A673 (cell line): ENCODE measurements at regions of chr3 and their contacts with region 1.

Region 1: DNA sequence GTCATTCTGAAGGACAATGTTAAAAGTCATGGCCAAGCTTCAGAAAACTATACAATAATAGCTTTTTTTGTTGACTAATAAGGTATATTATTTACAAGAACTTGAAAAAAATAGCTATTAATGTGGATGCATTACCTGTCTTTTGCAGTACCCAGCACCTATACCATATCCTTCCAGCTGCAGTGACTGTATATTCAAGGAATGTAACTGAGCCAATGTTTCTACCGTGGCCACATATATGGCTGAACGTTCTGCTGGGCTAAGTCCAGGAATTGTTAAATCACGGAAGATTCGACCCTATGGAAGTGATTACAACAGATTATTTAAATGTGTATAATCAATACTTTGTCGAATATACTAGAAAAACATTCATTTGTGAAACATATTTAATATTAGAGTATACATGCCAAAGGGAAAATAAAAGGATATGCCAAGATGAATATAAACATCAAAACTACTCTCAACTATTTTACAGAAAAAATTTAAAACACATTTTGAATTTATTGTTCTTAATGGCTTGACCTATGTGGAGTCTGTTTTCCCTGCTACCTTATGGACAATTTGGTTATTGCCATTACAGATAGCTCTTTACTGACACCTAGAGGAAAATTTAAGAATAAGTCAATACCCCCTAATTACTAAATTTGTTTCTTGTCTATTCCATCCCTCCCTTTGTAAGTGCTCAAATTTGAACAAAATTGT is 17.6 kb downstream of the ACAD11 start:
- DNase-seq: peak; percentile 77
- H3K4me3 ChIP-seq: no peak overlapping the region
- H3K27ac ChIP-seq: no peak overlapping the region
- H3K4me1 ChIP-seq: no peaks in the 10 kb centered on the region
- H3K27me3 ChIP-seq: no peaks in the 10 kb centered on the region
- CTCF ChIP-seq: peak; percentile 75

Region 2: DNA sequence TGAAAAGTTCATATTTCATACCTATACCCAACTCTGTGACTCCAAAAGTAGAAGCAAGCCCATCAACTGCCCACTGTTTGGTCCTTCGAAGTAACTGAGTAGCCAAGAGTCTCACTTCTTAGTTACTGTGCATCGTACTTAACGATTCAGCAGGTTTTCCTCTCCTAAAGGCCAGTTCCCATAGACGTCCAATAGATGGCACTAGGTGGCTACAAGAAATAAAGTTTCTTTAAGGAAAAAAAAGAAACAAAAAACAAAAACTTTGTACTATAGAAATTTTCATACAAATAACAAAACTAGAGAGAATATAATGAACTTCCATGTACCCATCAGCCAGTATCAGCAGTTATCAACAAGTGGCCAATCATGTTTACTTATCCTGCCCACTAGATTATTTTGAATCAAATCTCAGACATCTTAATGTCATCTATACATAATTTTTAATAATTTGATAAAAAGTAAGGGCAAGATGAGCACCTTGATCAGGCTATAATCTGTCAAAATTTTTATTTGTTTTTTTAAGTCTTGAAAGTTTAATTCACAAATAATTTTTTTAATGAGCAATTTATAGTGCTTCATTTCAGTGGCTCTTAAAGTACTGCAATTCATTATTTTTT is 388.6 kb before region 1 on chr3:
- CTCF ChIA-PET with region 1: no interaction called
- POLR2A ChIA-PET with region 1: no interaction called
- intact Hi-C with region 1: loop called (anchors 5 kb)
- DNase-seq: peak; percentile 79
- H3K4me3 ChIP-seq: no peak overlapping the region
- H3K27ac ChIP-seq: no peak overlapping the region
- H3K4me1 ChIP-seq: peaks cover 8% of the 10 kb centered on the region
- H3K27me3 ChIP-seq: no peaks in the 10 kb centered on the region
- CTCF ChIP-seq: peak; percentile 78

Region 3: GRCh38 chr3:132352541-132353143 is 289.3 kb before region 1 on chr3:
- CTCF ChIA-PET with region 1: no interaction called
- POLR2A ChIA-PET with region 1: no interaction called
- intact Hi-C with region 1: loop called (anchors 2 kb)
- DNase-seq: peak; percentile 77
- H3K4me3 ChIP-seq: no peak overlapping the region
- H3K27ac ChIP-seq: no peak overlapping the region
- H3K4me1 ChIP-seq: no peaks in the 10 kb centered on the region
- H3K27me3 ChIP-seq: no peaks in the 10 kb centered on the region
- CTCF ChIP-seq: peak; percentile 92

Region 4: DNA sequence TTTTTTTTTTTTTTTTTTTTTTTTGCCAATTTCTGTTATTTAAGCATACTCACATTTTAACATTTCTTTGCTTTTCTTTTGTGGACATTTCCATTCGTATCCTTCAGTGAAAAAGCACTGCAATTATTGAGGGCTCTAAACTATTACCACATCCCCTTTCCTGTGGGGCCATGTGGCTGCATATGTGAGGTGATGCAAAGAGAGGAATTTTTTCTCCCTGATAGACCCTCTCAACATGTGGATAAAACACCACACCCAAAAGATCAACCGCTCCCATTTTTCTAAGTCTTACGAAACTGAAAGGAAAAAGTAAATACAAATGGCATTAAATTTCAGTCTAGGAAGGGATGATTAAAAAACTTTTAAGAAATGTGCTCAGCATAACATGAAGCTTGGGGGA is 155.9 kb before region 1 on chr3:
- CTCF ChIA-PET with region 1: no interaction called
- POLR2A ChIA-PET with region 1: no interaction called
- intact Hi-C with region 1: no loop called
- DNase-seq: no peak
- H3K4me3 ChIP-seq: no peak overlapping the region
- H3K27ac ChIP-seq: no peak overlapping the region
- H3K4me1 ChIP-seq: no peaks in the 10 kb centered on the region
- H3K27me3 ChIP-seq: no peaks in the 10 kb centered on the region
- CTCF ChIP-seq: no peak

Region 5: DNA sequence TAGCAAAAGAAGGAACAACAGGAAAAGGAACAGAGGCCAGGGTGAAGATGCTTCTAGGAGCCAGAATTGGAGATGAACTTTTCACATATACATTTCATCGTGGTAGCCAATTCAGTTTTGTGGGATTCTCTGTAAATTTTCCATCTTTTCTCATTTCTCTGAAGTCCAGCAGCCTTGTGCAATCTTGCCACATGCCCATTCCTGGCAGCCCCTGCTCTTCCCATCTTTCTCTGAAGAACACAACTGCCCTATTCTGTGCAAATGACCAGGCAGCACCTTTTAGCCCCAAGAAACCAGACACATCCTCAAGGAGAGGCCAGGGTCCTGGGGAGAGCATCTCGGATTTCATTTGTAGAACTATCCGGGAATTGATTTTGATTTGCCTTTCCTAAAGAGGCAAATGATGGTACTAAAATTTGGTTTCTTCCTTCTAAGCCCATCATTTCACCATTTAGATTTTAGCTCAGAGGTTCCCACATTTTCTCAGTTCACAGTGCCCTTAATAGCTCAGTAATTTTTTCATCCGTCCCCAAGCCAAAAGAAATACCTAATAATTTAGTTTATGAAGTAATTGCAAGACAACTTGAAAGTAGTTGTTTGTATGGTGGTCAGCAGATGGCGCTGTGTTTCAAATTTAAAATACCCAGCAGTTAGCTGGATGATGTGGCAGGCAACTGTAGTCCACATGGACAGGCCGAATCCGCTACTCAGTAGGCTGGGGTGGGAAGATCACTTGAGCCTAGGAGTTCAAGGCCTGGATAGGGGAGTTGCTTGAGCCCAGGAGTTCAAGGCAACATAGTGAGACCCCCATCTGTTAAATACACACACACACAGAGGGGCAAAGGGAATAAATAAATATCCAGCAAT is 106.2 kb before region 1 on chr3:
- CTCF ChIA-PET with region 1: interaction called, 29 read pairs
- POLR2A ChIA-PET with region 1: no interaction called
- intact Hi-C with region 1: loop called (anchors 1 kb)
- DNase-seq: peak; percentile 79
- H3K4me3 ChIP-seq: no peak overlapping the region
- H3K27ac ChIP-seq: peak overlapping the region; percentile 3
- H3K4me1 ChIP-seq: no peaks in the 10 kb centered on the region
- H3K27me3 ChIP-seq: no peaks in the 10 kb centered on the region
- CTCF ChIP-seq: peak; percentile 75

Region 6: GRCh38 chr3:132730891-132731580 is 89.0 kb after region 1 on chr3:
- CTCF ChIA-PET with region 1: no interaction called
- POLR2A ChIA-PET with region 1: no interaction called
- intact Hi-C with region 1: no loop called
- DNase-seq: peak; percentile 61
- H3K4me3 ChIP-seq: no peak overlapping the region
- H3K27ac ChIP-seq: no peak overlapping the region
- H3K4me1 ChIP-seq: no peaks in the 10 kb centered on the region
- H3K27me3 ChIP-seq: peaks cover 42% of the 10 kb centered on the region
- CTCF ChIP-seq: peak; percentile 57

Region 7: GRCh38 chr3:132892951-132893350 is 251.0 kb after region 1 on chr3:
- CTCF ChIA-PET with region 1: no interaction called
- POLR2A ChIA-PET with region 1: no interaction called
- intact Hi-C with region 1: no loop called
- DNase-seq: no peak
- H3K4me3 ChIP-seq: no peak overlapping the region
- H3K27ac ChIP-seq: no peak overlapping the region
- H3K4me1 ChIP-seq: no peaks in the 10 kb centered on the region
- H3K27me3 ChIP-seq: no peaks in the 10 kb centered on the region
- CTCF ChIP-seq: no peak

Region 8: DNA sequence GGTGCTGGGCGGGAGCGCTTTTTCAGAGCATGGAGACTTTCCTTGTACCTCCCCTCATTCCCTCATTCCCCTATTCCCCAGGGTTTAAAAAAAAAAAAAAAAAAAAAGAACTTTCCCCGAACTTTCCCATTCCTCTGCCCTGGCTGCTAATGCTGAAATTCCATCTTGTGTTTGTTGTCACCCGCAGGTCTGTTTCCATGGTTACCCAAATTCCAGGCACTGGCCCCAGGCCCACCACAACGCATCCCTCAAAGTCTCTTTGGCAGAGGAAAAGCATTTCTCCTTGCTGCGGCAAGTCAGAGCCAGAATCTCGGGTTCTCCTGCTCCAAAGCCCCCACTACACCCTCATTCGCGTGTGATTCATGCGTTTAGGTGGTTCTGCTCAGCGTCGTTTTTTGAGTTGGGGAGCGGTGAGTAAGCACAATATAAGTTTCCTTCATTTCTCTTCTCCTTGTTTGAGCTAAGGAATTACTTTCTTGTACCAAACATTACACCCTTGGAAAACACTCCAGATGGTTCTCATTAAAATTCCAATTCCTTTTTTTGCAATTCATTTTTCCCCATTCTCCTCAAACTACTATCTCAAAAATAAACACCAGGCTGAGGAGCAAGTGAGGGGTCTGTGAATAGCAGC is 1822.2 kb after region 1 on chr3:
- CTCF ChIA-PET with region 1: no interaction called
- POLR2A ChIA-PET with region 1: no interaction called
- intact Hi-C with region 1: no loop called
- DNase-seq: peak; percentile 26
- H3K4me3 ChIP-seq: no peak overlapping the region
- H3K27ac ChIP-seq: no peak overlapping the region
- H3K4me1 ChIP-seq: no peaks in the 10 kb centered on the region
- H3K27me3 ChIP-seq: no peaks in the 10 kb centered on the region
- CTCF ChIP-seq: no peak